ENCODE measurements at regions of chr12 and their contacts with region 1.

Region 1: DNA sequence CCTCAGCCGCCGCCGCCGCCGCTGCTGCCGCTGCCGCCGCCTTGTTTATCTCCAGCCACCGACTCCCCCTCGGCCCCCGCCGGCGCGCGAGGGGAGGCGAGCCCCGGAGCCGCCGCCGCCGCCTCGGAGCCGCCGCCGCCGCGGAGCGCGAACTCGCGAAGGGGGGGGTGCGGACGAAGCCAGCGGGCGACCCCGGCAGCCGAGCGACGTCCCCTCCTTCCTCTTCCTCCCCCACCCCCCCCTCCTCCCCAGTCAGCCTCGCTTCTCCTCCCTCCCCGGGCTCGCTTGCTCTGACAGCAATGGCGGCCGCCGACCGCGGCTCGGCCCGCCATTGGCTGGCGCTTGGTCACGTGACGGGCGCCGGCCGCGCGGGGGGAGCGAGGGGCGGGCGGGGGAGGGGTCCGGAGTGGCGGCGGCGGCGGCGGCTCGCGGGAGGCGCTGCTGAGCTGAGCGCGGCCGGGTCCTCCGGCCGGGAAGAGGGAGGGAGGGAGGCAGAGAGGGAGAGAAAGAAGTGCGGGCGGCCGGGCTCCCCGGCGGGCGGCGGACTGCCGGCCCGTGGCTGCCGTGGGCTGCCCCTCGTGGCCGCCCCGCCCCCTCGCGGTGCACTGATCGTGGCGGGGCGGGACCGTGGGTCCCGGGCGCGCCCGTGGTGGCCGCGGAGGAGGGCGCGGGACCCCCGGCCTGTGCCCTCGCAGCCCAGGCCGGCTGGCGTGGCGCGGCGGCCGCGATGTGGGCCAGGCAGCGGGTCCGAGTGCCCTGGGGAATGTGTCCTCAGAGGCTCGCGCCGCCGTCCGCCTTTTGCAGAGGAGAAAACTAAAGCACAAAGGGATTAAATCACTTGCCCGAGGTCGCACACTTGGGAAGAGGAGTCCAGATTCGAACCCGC is at the start of gene MED13L:
- DNase-seq: peak; percentile 94
- H3K4me3 ChIP-seq: peak within 1 kb of the TSS; percentile 74 to 83 (median 79)
- H3K27ac ChIP-seq: peak within 1 kb of the TSS; percentile 92 to 98 (median 96)
- H3K4me1 ChIP-seq: peaks cover 0 to 40% (median 28%) of the 10 kb centered on the region in 4 donors
- H3K27me3 ChIP-seq: no peaks in the 10 kb centered on the region
- CTCF ChIP-seq: peak in 1 of 4 experiments; percentile 39
- EP300 ChIP-seq: no peak
- POLR2A ChIP-seq: no peak
- total RNA-seq, gene MED13L: 151 to 246 (median 213) TPM

Region 2: GRCh38 chr12:115998119-115998633 is 279.5 kb before region 1 on chr12:
- intact Hi-C with region 1: loop called (anchors 1 kb)
- DNase-seq: no peak
- H3K4me3 ChIP-seq: no peak overlapping the region
- H3K27ac ChIP-seq: peak overlapping the region in 3 of 4 donors; percentile 49 to 59 (median 59)
- H3K4me1 ChIP-seq: peaks cover 0 to 23% (median 16%) of the 10 kb centered on the region in 4 donors
- H3K27me3 ChIP-seq: no peaks in the 10 kb centered on the region
- CTCF ChIP-seq: peak; percentile 52 to 88 (median 70)
- EP300 ChIP-seq: no peak
- POLR2A ChIP-seq: no peak

Region 3: DNA sequence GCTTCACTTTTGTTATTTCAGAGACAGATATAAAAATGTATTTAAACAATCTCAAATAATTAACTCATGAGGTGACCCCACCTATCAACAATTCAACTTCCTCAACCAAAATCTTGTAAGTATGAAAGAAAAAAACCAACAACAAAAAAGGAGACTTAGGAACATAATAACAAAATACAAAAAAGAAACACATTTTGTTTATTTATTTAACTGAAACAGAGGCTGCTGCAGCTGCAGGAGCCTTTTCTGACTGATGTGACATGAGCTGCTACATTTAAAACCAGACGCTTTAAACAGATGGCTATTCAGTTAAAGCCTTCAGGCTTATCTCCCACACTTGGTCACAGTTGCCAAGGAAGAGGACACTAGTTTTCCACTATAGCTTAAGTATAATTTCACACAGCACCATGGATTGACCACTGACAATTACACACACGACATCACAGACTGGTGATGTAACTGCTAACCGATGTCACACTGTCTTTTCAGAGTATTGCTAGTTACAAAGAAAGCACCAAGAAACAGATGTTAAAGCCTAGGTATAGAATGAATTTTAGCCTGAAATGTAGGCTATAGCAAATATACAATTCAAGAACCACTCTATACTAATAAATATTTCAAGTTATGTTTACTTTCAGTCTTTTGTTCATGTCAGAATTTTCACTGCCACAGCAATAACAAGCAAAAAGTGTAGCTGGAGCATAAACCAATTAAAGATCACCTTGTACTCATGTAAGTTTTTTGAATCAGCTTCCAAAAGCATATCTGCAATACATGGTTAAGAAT is 113.2 kb before region 1 on chr12:
- intact Hi-C with region 1: no loop called
- DNase-seq: no peak
- H3K4me3 ChIP-seq: no peak overlapping the region
- H3K27ac ChIP-seq: peak overlapping the region in 2 of 4 donors; percentile 7 to 11
- H3K4me1 ChIP-seq: peaks cover 0 to 71% (median 59%) of the 10 kb centered on the region in 4 donors
- H3K27me3 ChIP-seq: no peaks in the 10 kb centered on the region
- CTCF ChIP-seq: no peak
- EP300 ChIP-seq: no peak
- POLR2A ChIP-seq: no peak

Region 4: DNA sequence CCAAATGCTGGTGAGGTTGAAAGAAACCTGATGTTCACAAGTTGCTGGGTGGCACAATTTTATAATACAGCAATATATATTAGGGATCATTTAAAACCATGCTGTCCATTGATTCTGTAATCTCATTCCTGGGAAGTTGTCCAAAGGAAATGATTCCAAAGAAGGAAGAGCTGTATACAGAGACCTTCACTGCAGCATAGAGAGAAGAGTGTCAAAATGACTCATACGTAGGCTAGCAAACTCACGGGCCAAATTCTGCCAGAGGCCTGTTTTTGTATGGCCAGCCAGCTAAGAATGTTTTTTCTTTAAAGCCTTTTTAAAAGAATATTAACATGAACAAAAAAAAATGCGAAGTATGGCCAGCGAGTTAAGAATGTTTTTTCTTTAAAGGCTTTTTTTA is 69.1 kb after region 1 on chr12:
- intact Hi-C with region 1: loop called (anchors 2 kb)
- DNase-seq: no peak
- H3K4me3 ChIP-seq: no peak overlapping the region
- H3K27ac ChIP-seq: peak overlapping the region in 1 of 4 donors; percentile 26
- H3K4me1 ChIP-seq: peaks cover 0 to 16% (median 11%) of the 10 kb centered on the region in 4 donors
- H3K27me3 ChIP-seq: no peaks in the 10 kb centered on the region
- CTCF ChIP-seq: no peak
- EP300 ChIP-seq: no peak
- POLR2A ChIP-seq: no peak

Region 5: DNA sequence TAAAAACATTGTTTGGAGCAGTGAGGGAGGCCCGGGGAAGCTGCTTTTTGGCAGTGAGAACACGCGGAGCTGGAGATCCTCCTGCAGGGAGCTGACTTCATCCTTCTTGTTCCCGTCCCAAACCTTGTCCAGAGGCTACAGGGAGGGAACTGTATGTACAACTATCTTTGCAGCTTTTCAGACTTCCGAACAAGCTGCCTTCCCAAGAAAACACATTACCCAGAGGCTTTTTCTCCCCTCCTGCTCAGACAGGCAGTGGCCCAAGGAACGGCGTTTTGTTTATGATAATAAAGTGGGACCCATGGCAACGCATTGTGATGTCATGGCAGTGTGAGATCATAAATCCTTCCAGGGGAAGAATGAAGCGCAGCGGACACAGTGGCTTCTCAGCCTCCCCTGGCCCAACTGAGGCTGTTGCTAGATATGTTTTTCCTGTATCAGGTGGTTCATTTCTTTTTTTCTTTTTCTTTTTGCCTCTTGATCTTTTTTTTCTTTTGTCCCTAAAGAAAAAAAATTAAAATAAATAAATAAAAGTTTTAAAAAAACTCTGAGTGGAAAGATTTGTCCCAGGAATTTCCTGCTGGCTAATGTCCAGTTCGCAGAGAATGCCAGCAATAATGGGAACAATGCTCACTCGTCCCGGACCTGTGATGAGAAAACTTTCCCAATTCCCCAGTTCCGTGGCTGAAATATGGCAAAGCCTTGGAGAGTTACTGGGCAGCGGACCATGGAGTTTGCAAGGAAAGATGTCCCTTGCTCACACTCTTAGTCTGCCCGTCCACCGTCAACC is 178.1 kb after region 1 on chr12:
- intact Hi-C with region 1: loop called (anchors 1 kb)
- DNase-seq: peak; percentile 96
- H3K4me3 ChIP-seq: no peak overlapping the region
- H3K27ac ChIP-seq: peak overlapping the region; percentile 79 to 86 (median 84)
- H3K4me1 ChIP-seq: peaks cover 0 to 38% (median 35%) of the 10 kb centered on the region in 4 donors
- H3K27me3 ChIP-seq: no peaks in the 10 kb centered on the region
- CTCF ChIP-seq: no peak
- EP300 ChIP-seq: peak; percentile 78 to 96 (median 90)
- POLR2A ChIP-seq: no peak

Region 6: DNA sequence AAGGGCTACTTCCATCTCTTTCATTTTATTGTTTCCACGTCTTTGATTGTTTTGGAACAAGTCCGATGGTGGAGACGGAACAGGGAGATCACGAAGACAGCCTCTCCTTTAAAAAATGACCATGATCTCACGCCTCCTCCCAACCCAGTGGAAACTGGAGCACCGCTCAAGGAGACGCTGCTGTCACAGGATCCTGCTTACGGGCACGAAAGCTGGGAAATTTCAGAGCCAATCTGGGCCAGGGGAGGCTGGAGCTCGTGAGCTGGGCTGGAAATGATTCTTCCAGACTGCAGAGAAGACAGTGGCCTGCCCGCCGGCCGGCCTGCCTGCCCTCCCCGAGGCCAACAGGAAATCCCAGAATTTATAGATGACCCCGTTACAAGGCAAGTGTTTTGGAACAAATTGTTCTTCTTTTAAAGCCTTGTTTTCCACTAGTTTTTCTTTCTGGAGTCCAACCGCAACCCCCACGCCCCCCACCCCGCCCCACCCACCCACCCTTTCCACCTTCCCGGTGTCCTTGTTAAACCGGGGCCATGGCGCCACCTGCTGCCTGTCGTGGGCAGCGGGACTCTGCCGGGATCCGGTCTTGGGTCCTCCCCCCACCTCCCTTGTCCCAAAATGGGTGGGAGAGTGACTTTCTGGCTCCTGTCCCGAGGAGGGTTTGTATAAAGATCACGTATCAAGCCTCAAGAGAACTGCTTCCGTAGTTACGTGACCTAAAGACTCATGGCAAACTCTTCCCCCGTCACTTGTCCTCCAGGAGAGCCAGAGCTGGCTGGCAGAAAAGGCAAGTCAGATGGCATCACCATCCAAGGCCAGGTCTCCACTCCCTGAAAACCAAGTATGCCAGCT is 321.9 kb after region 1 on chr12:
- intact Hi-C with region 1: loop called (anchors 2 kb)
- DNase-seq: peak; percentile 94
- H3K4me3 ChIP-seq: peak overlapping the region in 3 of 4 donors; percentile 26 to 40 (median 35)
- H3K27ac ChIP-seq: peak overlapping the region; percentile 75 to 86 (median 81)
- H3K4me1 ChIP-seq: peaks cover 0 to 37% (median 22%) of the 10 kb centered on the region in 4 donors
- H3K27me3 ChIP-seq: no peaks in the 10 kb centered on the region
- CTCF ChIP-seq: peak; percentile 11 to 81 (median 18)
- EP300 ChIP-seq: peak in 2 of 4 donors; percentile 74 to 79
- POLR2A ChIP-seq: no peak